ENCODE measurements at regions of chr2 and their contacts with region 1.

Region 1: GRCh38 chr2:58046585-58047372 is at the start of gene VRK2:
- DNase-seq: peak; percentile 85 to 89 (median 88)
- H3K4me3 ChIP-seq: peak within 1 kb of the TSS; percentile 32 to 61
- H3K4me3 Mint-ChIP-seq: peak within 1 kb of the TSS; percentile 90 to 95 (median 91)
- H3K27ac ChIP-seq: peak within 1 kb of the TSS; percentile 86
- H3K27ac Mint-ChIP-seq: peak within 1 kb of the TSS; percentile 94 to 98 (median 97)
- H3K4me1 ChIP-seq: peaks cover 42% of the 10 kb centered on the region
- H3K4me1 Mint-ChIP-seq: peaks cover 27 to 58% (median 38%) of the 10 kb centered on the region in 4 donors
- H3K27me3 ChIP-seq: no peaks in the 10 kb centered on the region
- H3K27me3 Mint-ChIP-seq: no peaks in the 10 kb centered on the region
- total RNA-seq, gene VRK2: 15.5 to 17.4 TPM

Region 2: DNA sequence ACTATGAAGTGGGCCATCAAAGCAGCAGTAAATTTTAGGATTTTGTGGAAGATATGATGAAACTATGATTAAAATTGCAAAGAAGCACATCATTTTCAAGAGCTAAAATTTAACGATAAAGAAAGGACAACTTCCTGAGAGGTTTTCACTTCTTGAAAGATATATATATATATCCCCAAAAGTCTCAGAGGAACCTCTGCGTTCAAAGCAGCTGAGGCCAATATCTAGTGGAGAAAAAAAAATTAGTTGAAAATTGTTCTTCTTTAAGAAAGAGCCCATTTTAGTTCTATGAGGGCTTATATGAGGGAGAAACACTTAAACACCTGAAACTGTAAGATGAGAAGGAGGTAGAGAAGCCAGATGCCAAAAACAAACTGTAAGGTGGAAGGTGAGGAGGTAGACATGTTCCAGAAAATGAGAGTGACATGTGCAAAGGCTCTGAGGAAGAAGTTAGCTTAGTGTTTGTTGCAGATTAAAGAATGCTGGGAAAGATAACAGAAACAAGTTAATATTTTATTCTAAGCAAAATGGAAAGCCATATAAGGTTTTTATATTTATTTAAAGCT is 73.1 kb before region 1 on chr2:
- CTCF ChIA-PET with region 1: no interaction called
- POLR2A ChIA-PET with region 1: no interaction called
- intact Hi-C with region 1: no loop called
- DNase-seq: no peak
- H3K4me3 ChIP-seq: no peak overlapping the region
- H3K4me3 Mint-ChIP-seq: no peak overlapping the region
- H3K27ac ChIP-seq: no peak overlapping the region
- H3K27ac Mint-ChIP-seq: no peak overlapping the region
- H3K4me1 ChIP-seq: no peaks in the 10 kb centered on the region
- H3K4me1 Mint-ChIP-seq: no peaks in the 10 kb centered on the region
- H3K27me3 ChIP-seq: no peaks in the 10 kb centered on the region
- H3K27me3 Mint-ChIP-seq: no peaks in the 10 kb centered on the region

Region 3: DNA sequence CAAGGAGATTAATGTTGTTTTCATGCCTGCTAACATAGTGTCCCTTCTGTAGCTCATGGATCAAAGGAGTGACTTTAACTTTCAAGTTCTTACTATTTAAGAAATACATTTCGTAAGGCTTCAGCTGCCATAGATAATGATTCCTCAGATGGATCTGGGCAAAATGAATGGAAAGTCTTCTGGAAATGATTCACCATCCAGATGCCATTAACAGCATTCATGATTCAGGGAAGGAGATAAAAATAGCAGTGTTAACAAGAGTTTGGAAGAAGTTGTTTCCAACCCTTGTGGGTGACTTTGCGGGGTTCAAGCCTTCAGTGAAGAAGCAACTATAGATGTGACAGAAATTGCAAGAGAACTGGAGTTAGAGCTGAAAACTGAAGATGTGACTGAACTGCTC is 16.9 kb after region 1 on chr2:
- CTCF ChIA-PET with region 1: interaction called, 5 read pairs
- POLR2A ChIA-PET with region 1: interaction called, 13 read pairs
- intact Hi-C with region 1: loop called (anchors 2 kb)
- DNase-seq: no peak
- H3K4me3 ChIP-seq: no peak overlapping the region
- H3K4me3 Mint-ChIP-seq: peak overlapping the region in 6 of 8 donors; percentile 1 to 68 (median 28)
- H3K27ac ChIP-seq: no peak overlapping the region
- H3K27ac Mint-ChIP-seq: peak overlapping the region in 4 of 7 donors; percentile 17 to 30 (median 18)
- H3K4me1 ChIP-seq: peaks cover 27% of the 10 kb centered on the region
- H3K4me1 Mint-ChIP-seq: peaks cover 29 to 48% (median 36%) of the 10 kb centered on the region in 4 donors
- H3K27me3 ChIP-seq: no peaks in the 10 kb centered on the region
- H3K27me3 Mint-ChIP-seq: no peaks in the 10 kb centered on the region

Region 4: GRCh38 chr2:58240670-58241545 is 194.1 kb after region 1 on chr2 and contains the start of gene FANCL:
- CTCF ChIA-PET with region 1: no interaction called
- POLR2A ChIA-PET with region 1: interaction called, 5 read pairs
- intact Hi-C with region 1: loop called (anchors 1 kb)
- DNase-seq: peak; percentile 47 to 66 (median 56)
- H3K4me3 ChIP-seq: peak within 1 kb of the TSS; percentile 81 to 99
- H3K4me3 Mint-ChIP-seq: peak within 1 kb of the TSS; percentile 92 to 98 (median 96)
- H3K27ac ChIP-seq: peak within 1 kb of the TSS; percentile 12
- H3K27ac Mint-ChIP-seq: peak within 1 kb of the TSS; percentile 52 to 93 (median 87)
- H3K4me1 ChIP-seq: peaks cover 18% of the 10 kb centered on the region
- H3K4me1 Mint-ChIP-seq: peaks cover 23 to 37% (median 29%) of the 10 kb centered on the region in 4 donors
- H3K27me3 ChIP-seq: no peaks in the 10 kb centered on the region
- H3K27me3 Mint-ChIP-seq: peaks cover 0 to 1% of the 10 kb centered on the region in 2 donors
- total RNA-seq, gene FANCL: 9.7 to 10.1 TPM

Region 5: GRCh38 chr2:58266211-58266610 is 219.4 kb after region 1 on chr2:
- CTCF ChIA-PET with region 1: no interaction called
- POLR2A ChIA-PET with region 1: no interaction called
- intact Hi-C with region 1: no loop called
- DNase-seq: no peak
- H3K4me3 ChIP-seq: no peak overlapping the region
- H3K4me3 Mint-ChIP-seq: no peak overlapping the region
- H3K27ac ChIP-seq: no peak overlapping the region
- H3K27ac Mint-ChIP-seq: no peak overlapping the region
- H3K4me1 ChIP-seq: no peaks in the 10 kb centered on the region
- H3K4me1 Mint-ChIP-seq: no peaks in the 10 kb centered on the region
- H3K27me3 ChIP-seq: no peaks in the 10 kb centered on the region
- H3K27me3 Mint-ChIP-seq: peaks cover 0 to 1% of the 10 kb centered on the region in 2 donors

Measured in CD4-positive, alpha-beta memory T cell (primary cell).